MCF 10A (cell line): ENCODE measurements at regions of chr13 and their contacts with region 1.

Region 1: GRCh38 chr13:49976314-49977258 is 20.3 kb upstream of the TRIM13 start:
- DNase-seq: peak; percentile 85
- H3K4me3 Mint-ChIP-seq: no peak overlapping the region
- H3K27ac Mint-ChIP-seq: peak overlapping the region; percentile 21
- H3K4me1 Mint-ChIP-seq: peaks cover 11% of the 10 kb centered on the region
- H3K27me3 Mint-ChIP-seq: no peaks in the 10 kb centered on the region
- CTCF ChIP-seq: peak; percentile 88

Region 2: GRCh38 chr13:49643035-49643646 is 333.4 kb before region 1 on chr13:
- CTCF ChIA-PET with region 1: no interaction called
- POLR2A ChIA-PET with region 1: no interaction called
- intact Hi-C with region 1: no loop called
- DNase-seq: no peak
- H3K4me3 Mint-ChIP-seq: no peak overlapping the region
- H3K27ac Mint-ChIP-seq: peak overlapping the region; percentile 94
- H3K4me1 Mint-ChIP-seq: peaks cover 23% of the 10 kb centered on the region
- H3K27me3 Mint-ChIP-seq: no peaks in the 10 kb centered on the region
- CTCF ChIP-seq: no peak

Region 3: DNA sequence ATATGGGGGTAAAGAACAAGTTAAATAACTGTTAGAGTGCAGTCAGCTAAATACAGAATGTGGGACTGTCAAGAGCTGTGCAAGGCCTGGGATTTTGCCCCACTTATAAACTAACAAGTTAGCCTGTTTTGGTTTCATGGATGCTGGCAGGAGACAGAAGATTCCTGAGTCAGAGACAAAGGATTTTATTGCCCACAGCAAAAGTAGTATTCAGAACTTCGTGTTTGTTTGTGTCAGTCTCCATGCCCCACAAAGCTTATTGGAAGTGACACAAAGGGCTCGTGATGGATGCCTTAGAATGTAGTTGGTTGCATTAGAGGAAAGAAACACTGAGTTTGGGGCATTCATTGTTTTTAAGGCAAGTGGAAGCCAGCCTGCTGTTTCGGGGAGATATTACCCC is 18.3 kb before region 1 on chr13:
- CTCF ChIA-PET with region 1: interaction called, 18 read pairs
- POLR2A ChIA-PET with region 1: no interaction called
- intact Hi-C with region 1: no loop called
- DNase-seq: no peak
- H3K4me3 Mint-ChIP-seq: no peak overlapping the region
- H3K27ac Mint-ChIP-seq: no peak overlapping the region
- H3K4me1 Mint-ChIP-seq: no peaks in the 10 kb centered on the region
- H3K27me3 Mint-ChIP-seq: no peaks in the 10 kb centered on the region
- CTCF ChIP-seq: no peak